HEK293 (cell line): ENCODE measurements at regions of chr6 and their contacts with region 1.

Region 1: DNA sequence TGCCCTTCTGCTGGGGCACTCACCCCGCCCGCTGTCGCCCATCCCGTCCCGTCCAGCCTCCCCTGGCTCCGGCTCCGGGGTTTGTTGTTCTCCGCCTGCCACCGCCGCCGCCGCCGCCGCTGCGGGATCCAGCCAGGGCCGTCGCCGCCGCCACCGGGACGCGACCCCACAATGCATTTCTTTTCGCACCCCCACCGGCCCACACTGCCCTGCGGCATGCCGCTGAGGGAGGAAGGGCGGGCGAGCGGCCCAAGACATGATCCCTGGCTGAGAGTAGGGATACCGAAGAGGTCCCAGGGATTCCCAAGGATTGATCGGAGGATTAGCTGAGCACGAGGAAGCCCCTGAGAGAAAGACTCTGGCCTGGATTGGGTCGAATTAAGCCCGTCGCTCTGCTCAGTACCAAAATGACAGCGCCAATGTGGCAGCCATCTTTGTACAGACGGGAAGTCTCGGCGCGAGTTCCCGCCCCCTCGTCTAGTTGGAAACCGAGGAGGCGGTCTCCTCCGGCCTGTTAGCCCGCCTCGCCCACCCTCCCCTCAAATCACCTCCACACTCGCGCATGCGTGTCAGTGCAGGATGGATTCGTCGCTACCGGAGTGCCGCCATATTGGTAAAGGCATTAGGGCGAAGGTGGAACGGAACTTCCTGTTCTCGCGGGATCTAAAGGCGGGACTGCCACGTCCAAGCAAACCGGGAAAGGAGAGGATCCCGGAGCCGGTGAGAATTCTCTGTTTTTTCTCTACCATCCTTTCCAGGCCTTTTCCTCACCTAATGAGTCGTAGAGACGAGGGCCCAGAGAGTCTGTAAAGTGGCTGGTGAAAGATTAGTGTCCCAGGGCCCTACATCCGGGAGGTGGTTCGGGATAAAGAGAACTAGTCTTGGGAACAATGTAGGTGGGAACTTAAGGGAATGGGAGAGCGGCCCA is at the starts of genes RXRB and SLC39A7:
- H3K4me3 ChIP-seq: peak within 1 kb of the TSS; percentile 75
- H3K27ac ChIP-seq: peak within 1 kb of the TSS; percentile 98
- H3K4me1 ChIP-seq: peaks cover 23% of the 10 kb centered on the region
- CTCF ChIP-seq: no peak

Region 2: DNA sequence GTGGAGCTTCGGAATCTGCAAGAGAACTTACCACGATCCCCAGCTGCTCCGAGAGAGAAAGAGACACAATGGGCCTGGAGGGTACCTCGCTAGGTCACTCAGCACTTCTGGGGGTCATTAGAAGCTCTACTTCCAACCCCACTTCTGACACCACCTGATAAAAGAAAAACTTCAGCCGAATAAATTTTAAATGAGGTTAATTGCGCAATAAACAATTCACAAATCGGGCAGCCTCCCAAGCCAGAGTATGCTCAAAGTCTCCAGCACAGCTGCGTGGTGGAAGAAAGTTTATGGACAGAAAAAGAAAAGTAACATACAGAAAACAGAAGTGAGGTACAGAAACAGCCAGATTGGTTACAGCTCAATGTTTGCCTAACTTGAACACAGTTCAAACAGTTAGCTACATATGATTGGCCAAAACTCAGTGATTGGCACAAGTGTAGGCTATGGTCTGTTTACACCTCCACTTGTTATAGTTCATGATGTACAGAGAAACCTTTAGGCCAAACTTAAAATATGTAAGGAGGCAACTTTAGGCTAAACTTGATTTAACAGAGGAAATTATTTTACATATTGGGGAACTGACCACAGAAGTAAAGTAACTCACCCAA is 60.8 kb before region 1 on chr6:
- CTCF ChIA-PET with region 1: interaction called, 11 read pairs
- POLR2A ChIA-PET with region 1: no interaction called
- H3K4me3 ChIP-seq: no peak overlapping the region
- H3K27ac ChIP-seq: no peak overlapping the region
- H3K4me1 ChIP-seq: no peaks in the 10 kb centered on the region
- CTCF ChIP-seq: no peak

Region 3: GRCh38 chr6:33161354-33162331 is 38.8 kb before region 1 on chr6:
- CTCF ChIA-PET with region 1: interaction called, 16 read pairs
- POLR2A ChIA-PET with region 1: interaction called, 6 read pairs
- H3K4me3 ChIP-seq: peak overlapping the region; percentile 26
- H3K27ac ChIP-seq: peak overlapping the region; percentile 13; the same call in 1 of the 2 replicates
- H3K4me1 ChIP-seq: 0 out of 2 replicates have a peak, but pooled peaks cover 2% of the 10 kb centered on the region
- CTCF ChIP-seq: peak; percentile 90